ENCODE measurements at regions of chr17 and their contacts with region 1.

Region 1: DNA sequence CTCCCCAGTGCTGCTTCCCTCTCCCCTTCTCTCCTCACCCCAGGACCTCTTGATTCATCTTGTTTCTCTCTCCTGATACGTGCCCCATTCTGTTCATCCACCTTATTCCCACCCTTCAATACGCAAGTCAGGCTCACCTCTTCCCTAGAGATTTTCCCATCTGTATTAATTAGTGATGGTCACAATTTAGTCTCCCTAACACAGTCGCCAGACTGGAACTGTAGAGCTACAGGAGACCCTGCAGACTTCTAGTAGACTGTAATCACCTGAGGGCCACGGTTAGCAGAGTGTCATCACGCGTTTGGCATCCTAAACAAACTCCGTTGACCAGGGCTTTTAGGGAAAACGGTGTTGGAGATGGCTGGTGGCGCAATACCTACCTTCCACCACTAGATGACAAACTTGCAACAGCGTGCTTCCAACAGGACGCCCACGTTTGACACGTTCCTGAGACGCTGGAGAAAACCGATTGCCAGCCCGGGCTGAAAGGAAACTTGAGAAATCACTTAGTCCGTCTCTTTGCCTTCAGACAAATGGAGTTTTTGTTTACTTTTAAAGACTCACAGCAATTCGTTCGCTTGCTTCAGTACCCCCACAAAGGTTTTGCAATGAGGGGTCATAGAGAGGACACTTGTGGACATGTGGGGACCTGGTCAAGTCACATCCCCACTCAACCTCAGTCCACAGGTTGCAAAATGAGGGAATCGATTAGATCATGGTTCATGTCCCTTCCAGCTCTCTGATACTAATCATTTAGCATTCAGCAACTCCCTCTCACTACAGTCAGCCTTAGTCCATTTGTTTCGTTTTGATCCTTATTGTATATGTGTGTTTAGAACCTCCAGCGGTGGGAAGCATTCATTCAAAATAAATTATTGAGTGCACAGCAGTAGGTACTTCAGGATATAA is 20.6 kb downstream of the MYL4 start:
- DNase-seq: peak; percentile 85 to 86 (median 85)
- H3K4me3 ChIP-seq: peak overlapping the region in 4 of 7 experiments; percentile 19 to 65 (median 30)
- H3K27ac ChIP-seq: no peak overlapping the region
- H3K4me1 ChIP-seq: peaks cover 0 to 18% (median 11%) of the 10 kb centered on the region in 4 experiments
- H3K27me3 ChIP-seq: no peaks in the 10 kb centered on the region

Region 2: GRCh38 chr17:47099987-47100711 is 129.6 kb before region 1 on chr17:
- CTCF ChIA-PET with region 1: no interaction called
- POLR2A ChIA-PET with region 1: no interaction called
- DNase-seq: peak; percentile 83 to 89 (median 87)
- H3K4me3 ChIP-seq: peak overlapping the region; percentile 75 to 99 (median 86)
- H3K27ac ChIP-seq: peak overlapping the region; percentile 66 to 76
- H3K4me1 ChIP-seq: peaks cover 0 to 10% (median 6%) of the 10 kb centered on the region in 4 experiments
- H3K27me3 ChIP-seq: no peaks in the 10 kb centered on the region

Region 3: DNA sequence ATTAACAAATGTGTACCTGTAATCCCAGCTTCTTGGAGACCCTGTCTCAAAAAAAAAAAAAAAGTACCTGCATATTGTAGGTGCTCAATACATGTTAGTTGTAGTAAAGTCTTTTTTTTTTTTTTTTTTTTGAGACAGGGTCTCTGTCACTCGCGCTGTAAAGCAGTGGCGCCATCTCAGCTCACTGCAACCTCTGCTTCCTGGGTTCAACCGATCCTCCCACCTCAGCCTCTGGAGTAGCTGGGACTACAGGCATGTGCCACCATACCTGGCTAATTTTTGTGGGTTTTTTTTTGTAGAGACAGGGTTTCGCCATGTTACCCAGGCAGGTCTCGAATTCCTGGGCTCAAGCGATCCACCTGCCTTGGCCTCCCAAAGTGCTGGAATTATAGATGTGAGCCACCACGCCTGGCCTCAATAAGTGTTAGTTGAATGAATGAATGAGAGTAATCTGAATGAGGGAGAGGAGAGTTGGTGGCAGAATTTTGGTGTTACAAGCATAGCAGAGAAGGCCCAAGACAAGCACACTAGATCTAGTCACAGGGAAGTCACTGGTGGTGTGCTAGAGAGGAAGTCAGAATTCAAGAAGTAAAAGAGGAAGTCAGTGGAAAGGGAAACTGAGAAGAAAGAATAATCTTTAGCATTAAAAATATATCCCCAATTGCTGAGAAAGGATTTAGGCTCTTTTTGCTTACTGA is 30.0 kb before region 1 on chr17:
- CTCF ChIA-PET with region 1: no interaction called
- POLR2A ChIA-PET with region 1: no interaction called
- DNase-seq: peak in 2 of 3 donors; percentile 77 to 84
- H3K4me3 ChIP-seq: peak overlapping the region in 1 of 7 experiments; percentile 36
- H3K27ac ChIP-seq: no peak overlapping the region
- H3K4me1 ChIP-seq: peaks cover 6 to 30% (median 16%) of the 10 kb centered on the region in 4 experiments
- H3K27me3 ChIP-seq: peaks cover 0 to under 1% (median 0%) of the 10 kb centered on the region in 5 experiments

Region 4: DNA sequence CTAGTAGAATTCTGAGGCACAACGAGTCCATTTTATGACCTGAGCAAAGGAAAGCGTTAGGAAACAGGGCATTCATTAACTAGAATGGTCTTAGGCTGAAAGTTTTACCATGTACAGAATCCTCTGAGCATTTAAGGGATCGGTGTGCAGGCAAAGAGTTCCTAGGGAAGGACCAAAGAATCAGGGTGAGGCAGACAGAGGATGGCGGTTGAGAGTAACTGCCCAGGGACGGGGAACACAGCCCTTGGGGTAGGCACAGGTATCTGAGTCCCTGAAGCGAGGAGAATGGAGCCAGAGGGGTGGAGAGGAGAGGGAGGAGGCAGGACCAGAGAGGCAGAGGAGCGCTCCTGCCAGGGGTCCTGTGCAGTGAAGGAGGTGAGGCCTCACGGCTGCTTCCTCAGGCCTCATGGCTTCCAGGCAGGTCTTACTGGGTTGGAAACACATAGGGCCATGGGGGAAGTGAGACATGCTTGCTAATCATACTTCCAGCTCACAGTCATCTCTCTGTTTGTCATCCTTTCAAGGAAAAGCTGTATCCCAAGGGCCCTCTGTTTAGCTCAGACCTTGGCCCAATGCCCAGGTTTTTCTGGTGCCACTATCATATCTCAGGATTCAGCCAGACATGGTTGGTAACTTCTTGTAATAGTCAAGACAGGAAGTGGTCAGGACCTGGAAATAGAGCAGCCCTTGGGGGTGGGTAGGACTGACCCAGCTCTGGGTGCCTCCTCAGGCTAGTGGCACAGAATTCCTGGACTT is 10.0 kb after region 1 on chr17:
- CTCF ChIA-PET with region 1: interaction called, 18 read pairs
- POLR2A ChIA-PET with region 1: no interaction called
- DNase-seq: peak; percentile 61 to 87 (median 85)
- H3K4me3 ChIP-seq: no peak overlapping the region
- H3K27ac ChIP-seq: no peak overlapping the region
- H3K4me1 ChIP-seq: peaks cover 0 to 29% (median 23%) of the 10 kb centered on the region in 4 experiments
- H3K27me3 ChIP-seq: no peaks in the 10 kb centered on the region

Region 5: GRCh38 chr17:47310186-47310970 is 80.6 kb after region 1 on chr17:
- CTCF ChIA-PET with region 1: interaction called, 38 read pairs
- POLR2A ChIA-PET with region 1: interaction called, 5 read pairs
- DNase-seq: no peak
- H3K4me3 ChIP-seq: no peak overlapping the region
- H3K27ac ChIP-seq: no peak overlapping the region
- H3K4me1 ChIP-seq: peaks cover 0 to 6% (median 0%) of the 10 kb centered on the region in 4 experiments
- H3K27me3 ChIP-seq: no peaks in the 10 kb centered on the region

Region 6: DNA sequence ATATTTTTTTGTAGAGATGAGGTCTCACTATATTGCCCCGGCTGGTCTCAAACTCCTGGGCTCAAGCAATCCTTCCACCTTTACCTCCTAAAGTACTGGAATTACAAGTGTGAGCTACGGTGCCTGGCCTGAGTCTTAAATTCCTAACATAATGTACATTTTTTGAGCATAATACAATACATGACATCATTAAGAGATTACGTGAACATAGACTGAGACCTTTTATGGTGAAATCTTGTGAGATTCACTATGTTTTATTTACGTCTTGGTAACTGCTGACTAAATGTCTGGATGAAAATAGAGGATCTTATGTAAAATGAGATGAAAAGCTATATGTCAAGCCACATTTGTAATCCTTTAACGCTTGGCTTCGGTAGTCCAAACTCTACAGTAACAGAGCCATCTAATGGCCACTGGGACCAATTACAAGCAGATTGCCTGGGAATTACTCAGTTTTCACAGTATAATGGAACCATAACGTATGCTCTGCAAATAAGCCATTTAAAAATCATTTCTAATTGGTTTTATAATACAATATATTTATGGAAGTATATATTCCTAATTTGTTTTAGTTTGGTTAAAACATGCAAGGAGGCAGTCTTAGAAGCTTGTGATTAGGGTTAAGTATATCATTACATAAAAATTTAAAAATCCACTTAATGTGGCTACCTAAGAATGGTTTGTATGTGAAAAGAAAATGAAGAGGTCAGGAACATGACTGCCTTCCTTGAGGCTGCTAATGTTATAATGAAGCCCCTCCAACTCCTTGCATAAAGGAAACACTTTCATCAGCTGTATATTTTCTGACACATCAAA is 85.9 kb after region 1 on chr17:
- CTCF ChIA-PET with region 1: interaction called, 38 read pairs
- POLR2A ChIA-PET with region 1: interaction called, 5 read pairs
- DNase-seq: peak; percentile 64 to 83 (median 80)
- H3K4me3 ChIP-seq: no peak overlapping the region
- H3K27ac ChIP-seq: no peak overlapping the region
- H3K4me1 ChIP-seq: peaks cover 0 to 6% (median 0%) of the 10 kb centered on the region in 4 experiments
- H3K27me3 ChIP-seq: no peaks in the 10 kb centered on the region

Measured in common myeloid progenitor, CD34-positive (primary cell).